IMR-90 (cell line): ENCODE measurements at regions of chr6 and their contacts with region 1.

Region 1: GRCh38 chr6:122730775-122731386 is 48.6 kb upstream of the FABP7 start:
- DNase-seq: peak; percentile 54
- ATAC-seq: peak; percentile 77
- H3K4me3 ChIP-seq: no peak overlapping the region
- H3K27ac ChIP-seq: no peak overlapping the region
- H3K4me1 ChIP-seq: no peaks in the 10 kb centered on the region
- H3K27me3 ChIP-seq: peaks cover 9% of the 10 kb centered on the region
- CTCF ChIP-seq: peak; percentile 94
- POLR2A ChIP-seq: no peak
- RAD21 ChIP-seq: peak; percentile 89

Region 2: DNA sequence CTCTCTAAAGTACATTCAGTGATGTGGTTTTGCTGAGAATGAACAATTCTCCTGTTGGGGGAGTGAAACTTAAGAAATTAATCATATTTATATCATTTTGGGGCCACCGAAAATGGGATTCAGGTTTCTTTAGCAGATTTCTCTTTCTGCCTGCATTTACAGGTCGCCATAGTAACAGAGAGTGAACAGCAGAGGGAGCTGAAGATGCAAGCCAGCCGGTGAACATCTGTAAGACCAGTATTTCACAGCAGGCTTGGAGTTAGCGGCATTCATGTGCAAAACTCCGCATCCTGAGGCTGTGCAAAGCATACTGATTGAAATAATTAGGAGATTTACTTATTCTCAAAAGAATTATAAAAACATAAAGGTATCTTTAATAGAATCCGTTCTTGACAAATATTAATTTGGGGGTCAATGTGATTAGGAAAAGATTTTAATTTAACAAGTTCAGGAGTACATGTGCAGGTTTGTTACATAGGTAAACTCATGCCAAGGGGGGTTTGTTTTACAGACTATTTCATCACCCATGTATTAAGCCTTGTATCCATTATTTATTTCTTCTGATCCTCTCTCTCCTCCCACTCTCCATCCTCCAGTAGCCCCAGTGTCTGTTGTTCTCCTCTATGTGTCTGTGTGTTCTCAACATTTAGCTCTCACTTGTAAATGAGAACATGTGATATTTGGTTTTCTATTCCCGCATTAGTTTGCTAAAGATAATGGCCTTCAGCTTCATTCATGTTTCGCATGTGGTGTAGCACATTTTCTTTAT is 349.2 kb before region 1 on chr6:
- CTCF ChIA-PET with region 1: no interaction called
- POLR2A ChIA-PET with region 1: no interaction called
- dilution Hi-C with region 1: no loop called
- in situ Hi-C with region 1: no loop called
- intact Hi-C with region 1: loop called (anchors 10 kb)
- DNase-seq: peak; percentile 79
- ATAC-seq: peak; percentile 96
- H3K4me3 ChIP-seq: no peak overlapping the region
- H3K27ac ChIP-seq: no peak overlapping the region
- H3K4me1 ChIP-seq: no peaks in the 10 kb centered on the region
- H3K27me3 ChIP-seq: no peaks in the 10 kb centered on the region
- CTCF ChIP-seq: peak; percentile 75
- POLR2A ChIP-seq: no peak
- RAD21 ChIP-seq: peak; percentile 74

Region 3: GRCh38 chr6:122491919-122492555 is 238.8 kb before region 1 on chr6:
- CTCF ChIA-PET with region 1: interaction called, 4 read pairs
- POLR2A ChIA-PET with region 1: no interaction called
- dilution Hi-C with region 1: no loop called
- in situ Hi-C with region 1: loop called (anchors 10 kb)
- intact Hi-C with region 1: loop called (anchors 1 kb)
- DNase-seq: peak; percentile 67
- ATAC-seq: peak; percentile 99
- H3K4me3 ChIP-seq: no peak overlapping the region
- H3K27ac ChIP-seq: no peak overlapping the region
- H3K4me1 ChIP-seq: no peaks in the 10 kb centered on the region; the same call in 1 of the 2 replicates
- H3K27me3 ChIP-seq: no peaks in the 10 kb centered on the region
- CTCF ChIP-seq: peak; percentile 85
- POLR2A ChIP-seq: no peak
- RAD21 ChIP-seq: peak; percentile 79

Region 4: GRCh38 chr6:122609856-122610689 is 120.8 kb before region 1 on chr6 and contains the start of gene PKIB:
- CTCF ChIA-PET with region 1: no interaction called
- POLR2A ChIA-PET with region 1: no interaction called
- dilution Hi-C with region 1: no loop called
- in situ Hi-C with region 1: no loop called
- intact Hi-C with region 1: loop called (anchors 2 kb)
- DNase-seq: peak; percentile 51
- ATAC-seq: peak; percentile 99
- H3K4me3 ChIP-seq: peak within 1 kb of the TSS; percentile 77
- H3K27ac ChIP-seq: no peak within 1 kb of the TSS
- H3K4me1 ChIP-seq: peaks cover 7% of the 10 kb centered on the region; the same call in 1 of the 2 replicates
- H3K27me3 ChIP-seq: peaks cover 18% of the 10 kb centered on the region
- CTCF ChIP-seq: peak; percentile 39
- POLR2A ChIP-seq: no peak
- RAD21 ChIP-seq: peak; percentile 38
- total RNA-seq, gene PKIB: 12.2 and 13.1 TPM in 2 replicates

Region 5: GRCh38 chr6:122663981-122664380 is 66.9 kb before region 1 on chr6:
- CTCF ChIA-PET with region 1: no interaction called
- POLR2A ChIA-PET with region 1: no interaction called
- dilution Hi-C with region 1: no loop called
- in situ Hi-C with region 1: no loop called
- intact Hi-C with region 1: no loop called
- DNase-seq: no peak
- ATAC-seq: no peak
- H3K4me3 ChIP-seq: no peak overlapping the region
- H3K27ac ChIP-seq: no peak overlapping the region
- H3K4me1 ChIP-seq: 0 out of 2 replicates have a peak, but pooled peaks cover 2% of the 10 kb centered on the region
- H3K27me3 ChIP-seq: no peaks in the 10 kb centered on the region
- CTCF ChIP-seq: no peak
- POLR2A ChIP-seq: no peak
- RAD21 ChIP-seq: no peak

Region 6: GRCh38 chr6:122839477-122839876 is 108.6 kb after region 1 on chr6:
- CTCF ChIA-PET with region 1: interaction called, 53 read pairs
- POLR2A ChIA-PET with region 1: interaction called, 3 read pairs
- dilution Hi-C with region 1: no loop called
- in situ Hi-C with region 1: loop called (anchors 5 kb)
- intact Hi-C with region 1: loop called (anchors 1 kb)
- DNase-seq: peak; percentile 50
- ATAC-seq: peak; percentile 96
- H3K4me3 ChIP-seq: no peak overlapping the region
- H3K27ac ChIP-seq: no peak overlapping the region
- H3K4me1 ChIP-seq: no peaks in the 10 kb centered on the region
- H3K27me3 ChIP-seq: no peaks in the 10 kb centered on the region
- CTCF ChIP-seq: peak; percentile 79
- POLR2A ChIP-seq: no peak
- RAD21 ChIP-seq: peak; percentile 67

Region 7: GRCh38 chr6:123316733-123317323 is 585.9 kb after region 1 on chr6:
- CTCF ChIA-PET with region 1: interaction called, 4 read pairs
- POLR2A ChIA-PET with region 1: no interaction called
- dilution Hi-C with region 1: no loop called
- in situ Hi-C with region 1: loop called (anchors 10 kb)
- intact Hi-C with region 1: loop called (anchors 1 kb)
- DNase-seq: peak; percentile 4
- ATAC-seq: no peak
- H3K4me3 ChIP-seq: no peak overlapping the region
- H3K27ac ChIP-seq: no peak overlapping the region
- H3K4me1 ChIP-seq: no peaks in the 10 kb centered on the region
- H3K27me3 ChIP-seq: no peaks in the 10 kb centered on the region
- CTCF ChIP-seq: peak; percentile 46
- POLR2A ChIP-seq: no peak
- RAD21 ChIP-seq: peak; percentile 9; the same call in 1 of the 2 replicates

Region 8: GRCh38 chr6:123415844-123416468 is 685.1 kb after region 1 on chr6:
- CTCF ChIA-PET with region 1: no interaction called
- POLR2A ChIA-PET with region 1: no interaction called
- dilution Hi-C with region 1: no loop called
- in situ Hi-C with region 1: no loop called
- intact Hi-C with region 1: loop called (anchors 10 kb)
- DNase-seq: peak; percentile 37
- ATAC-seq: peak; percentile 48; the same call in 1 of the 2 replicates
- H3K4me3 ChIP-seq: no peak overlapping the region
- H3K27ac ChIP-seq: no peak overlapping the region
- H3K4me1 ChIP-seq: no peaks in the 10 kb centered on the region
- H3K27me3 ChIP-seq: no peaks in the 10 kb centered on the region
- CTCF ChIP-seq: peak; percentile 57
- POLR2A ChIP-seq: no peak
- RAD21 ChIP-seq: peak; percentile 39